K562 (cell line): ENCODE measurements at regions of chr17 and their contacts with region 1.

Region 1: DNA sequence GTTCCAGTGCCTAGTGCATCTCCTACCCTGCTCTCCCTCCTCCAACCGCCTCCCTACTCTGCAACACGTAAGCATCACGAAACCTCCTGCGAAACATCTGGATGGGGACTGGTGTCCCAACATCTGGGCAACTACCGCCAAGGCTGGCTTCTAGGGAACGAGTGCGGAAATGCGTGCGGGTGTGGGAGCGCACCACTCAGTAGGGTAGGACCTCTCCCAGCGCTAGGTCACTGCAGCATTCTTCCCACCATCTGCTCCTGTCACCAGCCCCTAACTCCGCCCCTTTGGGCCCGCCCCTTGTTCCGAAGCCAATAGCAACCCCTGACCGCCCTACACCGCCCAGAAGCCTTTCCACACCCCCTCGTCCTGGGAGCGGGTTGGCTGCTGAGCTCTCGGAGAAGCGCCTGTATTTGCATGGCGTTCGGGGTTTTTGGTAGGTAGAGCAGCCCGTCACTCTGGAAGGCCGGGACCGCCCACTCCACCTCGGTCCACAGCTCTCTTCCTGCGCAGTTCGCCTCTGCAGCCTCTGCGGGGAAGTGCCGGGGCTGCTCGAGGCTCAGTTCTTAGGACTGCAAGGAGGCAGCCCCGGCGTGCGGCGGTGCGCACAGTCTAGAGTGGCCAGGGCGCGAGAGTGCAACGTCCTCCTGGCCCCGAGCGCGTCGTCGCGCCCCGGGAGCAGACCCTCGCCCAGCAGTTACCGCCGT is at the start of gene HS3ST3B1:
- DNase-seq: peak; percentile 90 to 96 (median 94)
- ATAC-seq: peak; percentile 90
- H3K4me3 ChIP-seq: peak within 1 kb of the TSS; percentile 54
- H3K27ac ChIP-seq: peak within 1 kb of the TSS; percentile 70
- H3K4me1 ChIP-seq: peaks cover 22 to 43% of the 10 kb centered on the region in 2 experiments; a peak in 4 of 5 replicates
- H3K27me3 ChIP-seq: peaks cover 0 to 3% of the 10 kb centered on the region in 2 experiments; a peak in 2 of 5 replicates
- CTCF ChIP-seq: 0 out of 6 replicates have a peak, but pooled peaks of 1 of the 3 experiments have one; percentile 6
- EP300 ChIP-seq: no peak
- POLR2A ChIP-seq: peak; percentile 86
- RAD21 ChIP-seq: no peak
- polyA plus RNA-seq, gene HS3ST3B1: 2.6 to 5.3 TPM

Region 2: GRCh38 chr17:14276535-14277250 is 24.0 kb before region 1 on chr17:
- CTCF ChIA-PET with region 1: no interaction called
- POLR2A ChIA-PET with region 1: no interaction called
- in situ Hi-C with region 1: no loop called
- intact Hi-C with region 1: no loop called
- DNase-seq: no peak
- ATAC-seq: no peak
- H3K4me3 ChIP-seq: no peak overlapping the region
- H3K27ac ChIP-seq: no peak overlapping the region
- H3K4me1 ChIP-seq: no peaks in the 10 kb centered on the region
- H3K27me3 ChIP-seq: peaks cover 0 to 3% of the 10 kb centered on the region in 2 experiments; a peak in 1 of 5 replicates
- CTCF ChIP-seq: no peak
- EP300 ChIP-seq: no peak
- POLR2A ChIP-seq: no peak
- RAD21 ChIP-seq: no peak

Region 3: DNA sequence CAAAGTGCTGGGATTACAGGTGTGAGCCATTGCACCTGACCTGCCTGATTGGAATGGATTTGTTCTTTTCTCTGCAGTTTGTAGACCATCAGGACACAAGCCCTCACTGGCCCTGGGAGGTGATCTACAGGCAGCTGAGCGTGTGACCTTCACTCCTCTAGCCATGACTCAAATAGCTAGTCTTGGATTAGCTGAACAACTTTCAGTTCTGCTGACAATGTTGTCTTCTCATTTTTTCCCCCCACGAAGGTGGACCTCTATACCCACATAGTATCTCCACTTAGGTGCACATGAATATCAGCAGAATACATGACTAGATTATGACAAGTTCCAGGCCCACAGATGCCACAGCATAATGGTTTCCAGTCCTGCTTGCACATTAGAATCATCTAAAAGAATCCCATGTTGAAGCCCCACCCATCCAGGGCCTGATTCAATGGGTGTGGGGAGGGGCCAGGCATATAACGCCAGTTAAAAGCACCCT is 36.9 kb after region 1 on chr17:
- CTCF ChIA-PET with region 1: no interaction called
- POLR2A ChIA-PET with region 1: no interaction called
- in situ Hi-C with region 1: no loop called
- intact Hi-C with region 1: loop called (anchors 5 kb)
- DNase-seq: no peak
- ATAC-seq: no peak
- H3K4me3 ChIP-seq: no peak overlapping the region
- H3K27ac ChIP-seq: no peak overlapping the region
- H3K4me1 ChIP-seq: peaks cover 11 to 38% of the 10 kb centered on the region in 2 experiments; a peak in 4 of 5 replicates
- H3K27me3 ChIP-seq: no peaks in the 10 kb centered on the region
- CTCF ChIP-seq: no peak
- EP300 ChIP-seq: no peak
- POLR2A ChIP-seq: no peak
- RAD21 ChIP-seq: no peak

Region 4: GRCh38 chr17:14361945-14362508 is 61.3 kb after region 1 on chr17:
- CTCF ChIA-PET with region 1: no interaction called
- POLR2A ChIA-PET with region 1: no interaction called
- in situ Hi-C with region 1: no loop called
- intact Hi-C with region 1: no loop called
- DNase-seq: peak in 1 of 4 experiments; percentile 18
- ATAC-seq: peak; percentile 42; the same call in 2 of the 3 replicates
- H3K4me3 ChIP-seq: no peak overlapping the region
- H3K27ac ChIP-seq: no peak overlapping the region
- H3K4me1 ChIP-seq: no peaks in the 10 kb centered on the region; a peak in 1 of 5 replicates
- H3K27me3 ChIP-seq: no peaks in the 10 kb centered on the region
- CTCF ChIP-seq: no peak
- EP300 ChIP-seq: no peak
- POLR2A ChIP-seq: no peak
- RAD21 ChIP-seq: no peak

Region 5: GRCh38 chr17:14813649-14814365 is 513.1 kb after region 1 on chr17:
- CTCF ChIA-PET with region 1: no interaction called
- POLR2A ChIA-PET with region 1: no interaction called
- in situ Hi-C with region 1: no loop called
- intact Hi-C with region 1: loop called (anchors 10 kb)
- DNase-seq: peak; percentile 19 to 50 (median 34)
- ATAC-seq: peak; percentile 69
- H3K4me3 ChIP-seq: no peak overlapping the region
- H3K27ac ChIP-seq: no peak overlapping the region
- H3K4me1 ChIP-seq: no peaks in the 10 kb centered on the region
- H3K27me3 ChIP-seq: no peaks in the 10 kb centered on the region
- CTCF ChIP-seq: peak; percentile 50 to 61 (median 50); a peak in 5 of 6 replicates
- EP300 ChIP-seq: no peak
- POLR2A ChIP-seq: no peak
- RAD21 ChIP-seq: peak; percentile 25 to 39; a peak in 2 of 4 replicates

Region 6: DNA sequence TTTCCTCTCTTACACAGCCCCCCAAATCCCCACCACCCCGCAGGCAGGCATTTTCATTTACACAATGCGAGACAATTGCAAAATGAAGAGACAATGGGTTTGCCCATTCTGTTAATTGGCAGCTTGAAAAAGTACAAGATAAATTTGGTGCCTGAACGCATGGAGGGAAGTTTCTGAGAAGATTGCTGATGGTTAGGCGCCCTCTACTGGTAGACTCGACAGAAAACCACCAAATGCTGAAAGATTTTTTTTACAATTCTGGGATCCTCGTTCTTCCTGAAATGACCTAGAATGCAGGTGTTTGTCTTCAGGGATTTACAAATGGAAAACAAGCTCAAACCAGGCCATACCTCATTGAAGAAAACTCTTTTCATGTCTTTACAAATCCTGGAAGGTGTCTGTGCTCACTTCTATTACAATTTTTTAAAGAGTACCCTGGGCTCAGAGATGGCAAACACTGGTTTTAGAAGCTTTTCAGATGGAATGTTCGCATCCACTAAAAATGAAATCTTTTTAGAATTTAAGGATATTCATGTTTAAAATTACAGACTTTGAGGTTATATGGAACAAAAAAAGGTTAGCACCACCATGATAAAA is 625.9 kb after region 1 on chr17:
- CTCF ChIA-PET with region 1: no interaction called
- POLR2A ChIA-PET with region 1: interaction called, 3 read pairs
- in situ Hi-C with region 1: no loop called
- intact Hi-C with region 1: loop called (anchors 10 kb)
- DNase-seq: peak; percentile 12 to 58 (median 24)
- ATAC-seq: no peak
- H3K4me3 ChIP-seq: no peak overlapping the region
- H3K27ac ChIP-seq: no peak overlapping the region
- H3K4me1 ChIP-seq: no peaks in the 10 kb centered on the region
- H3K27me3 ChIP-seq: no peaks in the 10 kb centered on the region
- CTCF ChIP-seq: peak; percentile 51 to 76 (median 62)
- EP300 ChIP-seq: no peak
- POLR2A ChIP-seq: no peak
- RAD21 ChIP-seq: peak; percentile 64 to 72